HEK293 (cell line): ENCODE measurements at regions of chr5 and their contacts with region 1.

Region 1: DNA sequence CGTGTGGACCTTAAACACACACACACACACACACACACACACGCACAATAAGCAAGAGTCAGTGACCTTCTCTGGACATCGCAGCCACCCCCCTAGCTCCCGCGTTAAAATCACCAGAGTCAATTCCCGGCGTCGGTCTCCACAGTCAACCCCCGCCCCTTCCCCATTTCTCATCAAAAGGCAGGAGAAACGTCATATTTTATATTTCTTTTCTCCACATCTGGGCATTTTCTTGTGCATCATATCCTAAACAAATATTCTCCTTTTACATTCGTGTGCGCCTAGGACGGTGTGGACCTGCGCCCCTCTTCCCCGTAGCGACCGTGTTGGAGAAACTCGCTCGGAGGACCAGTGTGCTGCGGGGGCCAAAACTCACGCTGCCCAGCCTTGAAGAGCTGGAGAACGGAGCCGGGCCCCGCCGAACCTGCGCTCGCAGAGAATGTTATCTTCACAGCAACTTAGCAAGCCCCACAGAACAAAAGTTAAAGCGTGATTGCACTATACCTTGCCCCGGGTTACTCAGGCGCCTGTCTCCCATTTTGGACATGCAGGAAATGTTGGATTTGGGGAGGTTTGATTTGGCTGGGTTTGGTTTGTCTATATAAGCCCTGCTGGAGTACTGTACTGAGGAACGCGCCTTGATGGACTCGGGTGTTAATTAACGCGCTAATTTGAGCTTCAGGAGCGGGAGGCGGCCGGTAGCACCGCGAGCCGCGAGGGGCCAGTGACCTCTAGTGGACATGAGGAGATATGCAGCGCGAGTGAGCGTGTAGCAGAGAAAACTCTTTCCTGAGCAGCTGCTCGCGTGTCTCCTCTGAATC is 192.4 kb downstream of the MEF2C start:
- H3K4me3 ChIP-seq: peak overlapping the region; percentile 27
- H3K27ac ChIP-seq: no peak overlapping the region
- H3K4me1 ChIP-seq: no peaks in the 10 kb centered on the region
- CTCF ChIP-seq: peak; percentile 97

Region 2: DNA sequence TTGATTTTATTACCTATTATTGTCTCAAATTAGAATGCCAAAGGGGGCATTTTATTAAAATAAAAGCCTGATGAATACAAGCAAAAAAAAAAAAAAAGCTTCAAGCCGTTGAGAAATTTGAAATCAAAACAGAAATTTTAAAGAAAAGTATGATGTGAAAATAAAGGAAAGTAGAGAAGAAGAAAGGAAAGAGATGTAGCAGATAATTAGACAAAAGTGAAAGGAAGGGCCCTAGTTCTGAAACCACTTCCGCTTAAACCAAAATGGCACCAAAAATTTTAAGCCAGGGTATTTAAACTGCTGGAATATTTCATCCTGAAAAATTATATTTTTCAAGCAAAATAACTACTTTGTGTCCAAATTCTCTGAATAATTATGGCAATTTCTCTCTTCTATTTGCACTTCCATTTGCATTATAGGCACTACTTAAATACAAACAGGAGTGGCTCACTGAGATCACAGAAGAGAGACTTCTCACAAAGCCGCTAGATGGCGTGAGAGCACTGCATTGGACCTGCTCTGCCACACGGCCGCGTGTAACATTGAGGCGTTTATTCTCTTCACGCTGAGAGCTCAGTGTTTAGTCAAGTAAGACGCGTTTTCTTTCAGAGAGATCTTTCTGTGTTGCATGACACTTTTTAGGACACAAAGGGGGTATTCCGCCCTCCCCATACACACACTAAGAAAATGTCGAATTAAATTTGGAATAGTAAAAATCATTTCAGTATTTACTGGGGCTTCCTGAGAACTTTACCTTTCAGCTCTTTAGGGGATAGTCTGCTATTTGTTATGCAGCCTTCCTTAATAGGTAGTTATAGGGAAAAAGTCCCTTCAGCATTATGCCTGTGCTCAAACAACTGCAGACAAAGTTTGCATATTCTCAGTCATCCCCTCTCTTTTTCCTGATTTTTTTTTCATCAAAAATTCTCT is 909.5 kb before region 1 on chr5:
- CTCF ChIA-PET with region 1: interaction called, 46 read pairs
- POLR2A ChIA-PET with region 1: interaction called, 4 read pairs
- H3K4me3 ChIP-seq: no peak overlapping the region
- H3K27ac ChIP-seq: no peak overlapping the region
- H3K4me1 ChIP-seq: no peaks in the 10 kb centered on the region
- CTCF ChIP-seq: peak; percentile 78

Region 3: DNA sequence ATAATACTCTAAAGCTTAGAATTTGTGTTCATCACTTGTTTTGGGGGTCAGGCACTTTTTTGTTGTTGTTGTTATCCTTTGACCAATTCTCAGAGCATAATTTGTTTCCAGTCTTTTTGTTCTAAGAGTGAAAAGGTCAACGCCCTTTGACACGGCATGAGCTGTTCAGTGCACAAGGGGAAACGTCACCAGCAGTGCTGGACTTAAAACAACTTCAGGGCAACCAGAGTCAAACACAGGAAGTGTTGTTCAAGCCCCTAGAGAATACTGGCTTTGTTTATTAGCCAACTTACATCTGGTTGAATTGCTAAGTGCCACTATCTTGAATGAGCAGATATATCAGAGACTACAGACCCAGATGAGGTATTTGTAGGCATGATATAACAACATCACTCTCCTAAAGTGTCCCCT is 790.9 kb before region 1 on chr5:
- CTCF ChIA-PET with region 1: interaction called, 11 read pairs
- POLR2A ChIA-PET with region 1: no interaction called
- H3K4me3 ChIP-seq: no peak overlapping the region
- H3K27ac ChIP-seq: no peak overlapping the region
- H3K4me1 ChIP-seq: peaks cover 4% of the 10 kb centered on the region
- CTCF ChIP-seq: no peak

Region 4: DNA sequence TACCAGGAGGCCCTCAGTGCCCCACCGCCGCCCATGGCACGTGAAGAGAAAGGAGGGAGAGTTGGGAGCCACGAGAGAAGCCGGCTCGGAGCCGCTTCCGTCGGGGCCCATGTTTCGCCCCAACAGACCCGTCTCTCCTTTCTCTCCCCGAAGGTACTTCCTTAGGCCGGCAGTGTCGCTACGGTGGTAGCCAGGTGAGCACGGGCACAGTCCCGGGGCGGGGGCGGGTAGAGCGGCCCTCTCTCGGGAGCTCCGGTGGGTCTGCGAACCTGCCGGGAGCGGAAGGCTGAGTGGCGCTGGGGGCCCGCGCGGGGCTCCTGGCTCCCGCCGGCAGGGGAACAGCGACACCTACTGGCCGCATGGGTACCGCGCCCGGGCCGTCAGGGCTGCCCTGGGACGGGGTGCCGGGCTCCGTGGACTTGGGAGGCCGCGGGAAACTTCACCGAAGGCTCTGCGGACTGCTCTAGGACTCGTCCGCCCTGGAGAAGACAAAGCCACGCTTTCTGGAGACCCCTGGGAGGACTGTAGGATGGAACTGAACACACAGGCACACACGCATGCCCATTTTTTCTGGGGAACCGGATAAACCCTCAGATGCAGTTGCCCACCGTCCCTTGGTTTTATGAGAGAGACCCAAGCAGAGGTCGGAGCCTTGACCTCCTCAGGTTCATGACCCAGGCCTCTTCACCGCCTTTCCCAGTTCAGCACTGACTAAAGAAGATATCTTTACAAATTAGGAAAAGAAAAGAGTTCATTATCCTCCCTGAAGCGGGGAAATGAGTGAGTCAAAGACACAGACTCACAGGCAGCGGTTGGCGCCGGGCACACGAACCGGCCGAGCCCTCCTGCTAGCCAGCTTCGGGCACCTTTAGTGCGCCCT is 10.1 kb before region 1 on chr5:
- CTCF ChIA-PET with region 1: interaction called, 28 read pairs
- POLR2A ChIA-PET with region 1: no interaction called
- H3K4me3 ChIP-seq: peak overlapping the region; percentile 35
- H3K27ac ChIP-seq: peak overlapping the region; percentile 80; the same call in 1 of the 2 replicates
- H3K4me1 ChIP-seq: peaks cover 3% of the 10 kb centered on the region
- CTCF ChIP-seq: peak; percentile 95

Region 5: GRCh38 chr5:88702328-88702727 is 11.7 kb after region 1 on chr5:
- CTCF ChIA-PET with region 1: interaction called, 12 read pairs
- POLR2A ChIA-PET with region 1: no interaction called
- H3K4me3 ChIP-seq: no peak overlapping the region
- H3K27ac ChIP-seq: no peak overlapping the region
- H3K4me1 ChIP-seq: no peaks in the 10 kb centered on the region
- CTCF ChIP-seq: no peak

Region 6: GRCh38 chr5:88707216-88707965 is 16.8 kb after region 1 on chr5:
- CTCF ChIA-PET with region 1: interaction called, 12 read pairs
- POLR2A ChIA-PET with region 1: no interaction called
- H3K4me3 ChIP-seq: no peak overlapping the region
- H3K27ac ChIP-seq: no peak overlapping the region
- H3K4me1 ChIP-seq: no peaks in the 10 kb centered on the region
- CTCF ChIP-seq: no peak